MCF 10A (cell line): ENCODE measurements at regions of chr16 and their contacts with region 1.

Region 1: GRCh38 chr16:20774703-20775362 is 11.0 kb downstream of the ACSM3 start:
- DNase-seq: peak; percentile 81
- H3K4me3 Mint-ChIP-seq: no peak overlapping the region
- H3K27ac Mint-ChIP-seq: no peak overlapping the region
- H3K4me1 Mint-ChIP-seq: no peaks in the 10 kb centered on the region
- H3K27me3 Mint-ChIP-seq: no peaks in the 10 kb centered on the region
- CTCF ChIP-seq: peak; percentile 66

Region 2: GRCh38 chr16:20364051-20364450 is 410.8 kb before region 1 on chr16:
- CTCF ChIA-PET with region 1: no interaction called
- POLR2A ChIA-PET with region 1: no interaction called
- intact Hi-C with region 1: no loop called
- DNase-seq: no peak
- H3K4me3 Mint-ChIP-seq: no peak overlapping the region
- H3K27ac Mint-ChIP-seq: no peak overlapping the region
- H3K4me1 Mint-ChIP-seq: no peaks in the 10 kb centered on the region
- H3K27me3 Mint-ChIP-seq: peaks cover 56% of the 10 kb centered on the region
- CTCF ChIP-seq: no peak

Region 3: GRCh38 chr16:20789130-20789529 is 14.3 kb after region 1 on chr16:
- CTCF ChIA-PET with region 1: interaction called, 13 read pairs
- POLR2A ChIA-PET with region 1: interaction called, 3 read pairs
- intact Hi-C with region 1: no loop called
- DNase-seq: no peak
- H3K4me3 Mint-ChIP-seq: no peak overlapping the region
- H3K27ac Mint-ChIP-seq: no peak overlapping the region
- H3K4me1 Mint-ChIP-seq: no peaks in the 10 kb centered on the region
- H3K27me3 Mint-ChIP-seq: no peaks in the 10 kb centered on the region
- CTCF ChIP-seq: no peak